Mammary epithelial cell (primary cell): ENCODE measurements at regions of chr17 and their contacts with region 1.

Region 1: GRCh38 chr17:63082273-63082993 is 116.4 kb downstream of the TANC2 start:
- DNase-seq: peak; percentile 5
- H3K4me3 ChIP-seq: no peak overlapping the region
- H3K27ac ChIP-seq: no peak overlapping the region
- H3K4me1 ChIP-seq: peaks cover 25% of the 10 kb centered on the region
- H3K27me3 ChIP-seq: no peaks in the 10 kb centered on the region
- CTCF ChIP-seq: peak; percentile 31 to 50

Region 2: GRCh38 chr17:62995377-62995885 is 87.0 kb before region 1 on chr17:
- CTCF ChIA-PET with region 1: interaction called, 5 read pairs
- dilution Hi-C with region 1: no loop called
- in situ Hi-C with region 1: no loop called
- intact Hi-C with region 1: loop called (anchors 2 kb)
- DNase-seq: peak; percentile 43
- H3K4me3 ChIP-seq: no peak overlapping the region
- H3K27ac ChIP-seq: no peak overlapping the region
- H3K4me1 ChIP-seq: peaks cover 15% of the 10 kb centered on the region
- H3K27me3 ChIP-seq: no peaks in the 10 kb centered on the region
- CTCF ChIP-seq: peak; percentile 53 to 72

Region 3: GRCh38 chr17:63406689-63407330 is 324.4 kb after region 1 on chr17:
- CTCF ChIA-PET with region 1: interaction called, 6 read pairs
- dilution Hi-C with region 1: no loop called
- in situ Hi-C with region 1: no loop called
- intact Hi-C with region 1: loop called (anchors 1 kb)
- DNase-seq: peak; percentile 77
- H3K4me3 ChIP-seq: no peak overlapping the region
- H3K27ac ChIP-seq: peak overlapping the region; percentile 55
- H3K4me1 ChIP-seq: peaks cover 7% of the 10 kb centered on the region
- H3K27me3 ChIP-seq: no peaks in the 10 kb centered on the region
- CTCF ChIP-seq: peak; percentile 80 to 86

Region 4: GRCh38 chr17:63611354-63611753 is 528.9 kb after region 1 on chr17:
- CTCF ChIA-PET with region 1: no interaction called
- dilution Hi-C with region 1: no loop called
- in situ Hi-C with region 1: no loop called
- intact Hi-C with region 1: loop called (anchors 10 kb)
- DNase-seq: no peak
- H3K4me3 ChIP-seq: no peak overlapping the region
- H3K27ac ChIP-seq: no peak overlapping the region
- H3K4me1 ChIP-seq: no peaks in the 10 kb centered on the region
- H3K27me3 ChIP-seq: no peaks in the 10 kb centered on the region
- CTCF ChIP-seq: no peak